GM18951 (cell line): ENCODE measurements at regions of chr12 and their contacts with region 1.

Region 1: DNA sequence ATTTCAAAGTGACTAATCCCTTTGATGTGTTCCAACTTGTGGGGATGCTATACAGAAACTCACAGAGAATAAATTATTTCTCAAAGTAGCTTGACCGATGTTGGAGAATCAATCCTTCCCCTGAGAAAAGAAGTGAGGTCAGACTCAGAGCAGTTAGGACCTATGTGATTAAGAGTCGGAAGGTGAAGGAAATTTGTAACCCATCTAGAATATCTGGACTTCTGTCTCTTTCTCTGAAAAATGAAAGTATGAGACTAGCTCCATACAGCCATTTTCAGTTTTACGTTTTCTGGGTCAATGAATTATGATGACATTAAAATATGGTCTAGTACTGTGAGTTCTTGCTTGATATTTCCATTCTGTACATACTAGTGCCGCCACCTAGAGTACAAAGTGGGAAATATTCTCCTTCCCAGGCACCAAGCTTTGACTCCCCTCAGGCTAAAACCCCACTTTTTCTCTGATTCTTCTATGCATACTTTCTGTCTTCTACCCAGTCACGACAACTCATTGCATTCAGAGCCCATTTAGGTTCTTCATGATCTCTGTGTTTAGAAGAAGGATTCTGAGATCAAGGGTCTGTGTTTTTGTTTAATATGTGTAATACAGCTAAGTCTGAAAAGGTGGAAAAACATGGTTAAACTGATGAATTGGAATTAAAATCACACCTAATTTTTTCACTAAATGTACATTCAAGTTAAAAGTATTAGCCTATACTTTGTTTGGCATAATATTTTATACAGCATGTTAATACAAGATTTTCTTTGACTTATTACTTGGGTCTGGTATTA is 6.9 kb upstream of the NTS start:
- POLR2A ChIP-seq: no peak

Region 2: DNA sequence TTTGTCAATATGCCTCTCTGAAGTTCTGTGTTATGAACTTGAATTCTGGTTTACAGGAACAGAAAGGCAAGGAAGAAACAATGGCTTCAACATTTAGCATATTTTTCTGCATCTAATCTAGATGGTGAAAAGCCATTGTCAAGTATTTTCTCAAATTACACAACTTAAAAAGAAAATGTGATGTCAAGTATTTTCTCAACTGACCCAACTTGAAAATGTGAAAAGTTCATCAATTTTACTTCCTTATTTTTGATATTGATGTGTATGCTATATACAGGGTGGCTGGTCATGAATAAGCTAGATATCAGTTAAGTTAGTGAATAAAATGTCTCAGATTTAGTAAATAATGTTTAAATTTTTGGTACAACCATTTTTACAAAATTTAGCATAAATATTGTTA is 390.4 kb before region 1 on chr12:
- in situ Hi-C with region 1: loop called (anchors 10 kb)
- POLR2A ChIP-seq: no peak

Region 3: GRCh38 chr12:85575120-85576096 is 291.8 kb before region 1 on chr12:
- in situ Hi-C with region 1: loop called (anchors 10 kb)
- POLR2A ChIP-seq: no peak